ENCODE measurements at regions of chr7 and their contacts with region 1.

Region 1: DNA sequence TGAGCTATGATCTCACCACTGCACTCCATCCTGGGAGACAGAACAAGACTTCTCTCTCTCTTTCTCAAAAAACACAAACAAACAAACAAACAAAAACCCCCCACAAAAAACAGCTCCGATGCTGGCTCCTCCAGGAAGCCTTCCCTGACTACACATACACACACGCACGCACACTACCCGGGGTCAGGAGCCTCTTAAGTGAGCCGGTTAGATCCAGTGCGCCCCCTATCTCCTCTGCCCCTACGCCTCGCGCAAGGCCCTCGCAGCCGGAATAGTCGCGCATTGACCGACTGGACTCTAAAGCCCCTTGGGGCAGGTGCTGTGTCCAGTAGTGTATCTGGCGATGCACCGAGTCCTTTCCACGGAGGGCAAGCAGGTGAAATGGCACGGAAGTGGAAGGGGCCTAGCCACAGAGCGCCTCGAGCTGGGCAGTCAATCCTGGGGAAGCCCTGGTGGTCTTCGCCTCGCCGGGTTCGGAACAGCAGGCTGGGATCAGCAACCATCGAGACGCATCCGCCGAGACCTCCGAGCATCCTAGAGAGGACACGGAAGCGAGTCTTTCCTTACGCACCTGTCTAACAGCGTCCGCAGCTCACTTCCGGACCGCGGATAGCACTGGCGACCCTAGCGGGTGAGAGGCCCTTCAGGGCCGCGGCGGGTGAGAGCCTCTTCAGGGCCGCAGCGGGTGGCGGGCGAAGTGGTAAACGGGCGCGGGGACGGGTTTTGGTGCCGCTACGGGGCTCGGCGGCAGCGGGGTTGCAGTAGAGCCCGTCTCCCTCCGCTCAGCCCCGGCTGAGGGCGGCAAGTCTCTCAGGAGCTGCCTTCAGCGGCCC is at the start of gene ZSCAN25:
- DNase-seq: peak; percentile 80
- H3K4me3 Mint-ChIP-seq: peak within 1 kb of the TSS; percentile 92
- H3K27ac Mint-ChIP-seq: peak within 1 kb of the TSS; percentile 91
- H3K4me1 Mint-ChIP-seq: peaks cover 39% of the 10 kb centered on the region
- H3K27me3 Mint-ChIP-seq: peaks cover 4% of the 10 kb centered on the region
- total RNA-seq, gene ZSCAN25: 31.2 and 31.7 TPM in 2 replicates

Region 2: GRCh38 chr7:99558306-99559174 is 58.0 kb before region 1 on chr7 and contains the start of gene ZNF655:
- intact Hi-C with region 1: loop called (anchors 2 kb)
- DNase-seq: peak; percentile 87
- H3K4me3 Mint-ChIP-seq: peak within 1 kb of the TSS; percentile 100
- H3K27ac Mint-ChIP-seq: peak within 1 kb of the TSS; percentile 98
- H3K4me1 Mint-ChIP-seq: peaks cover 37% of the 10 kb centered on the region
- H3K27me3 Mint-ChIP-seq: no peaks in the 10 kb centered on the region
- total RNA-seq, gene ZNF655: 68.3 and 72.8 TPM in 2 replicates

Region 3: GRCh38 chr7:99707096-99707495 is 90.5 kb after region 1 on chr7:
- intact Hi-C with region 1: no loop called
- DNase-seq: no peak
- H3K4me3 Mint-ChIP-seq: no peak overlapping the region
- H3K27ac Mint-ChIP-seq: no peak overlapping the region
- H3K4me1 Mint-ChIP-seq: no peaks in the 10 kb centered on the region
- H3K27me3 Mint-ChIP-seq: no peaks in the 10 kb centered on the region

Measured in activated T-helper 2 cell treated with anti-CD3 and anti-CD28 coated beads, Interferon-gamma antibody, Interleukin-2, Interleukin-4, amounts not matched to agents 10 μg/mL and 5 μg/mL and 100 μg/mL, durations not matched to agents 14 hours and 24 hours and 36 hours (primary cell).